ENCODE measurements at regions of chr4 and their contacts with region 1.

Region 1: GRCh38 chr4:119041951-119042560 is 93.6 kb upstream of the MYOZ2 start:
- DNase-seq: peak; percentile 63
- CTCF ChIP-seq: peak; percentile 39

Region 2: DNA sequence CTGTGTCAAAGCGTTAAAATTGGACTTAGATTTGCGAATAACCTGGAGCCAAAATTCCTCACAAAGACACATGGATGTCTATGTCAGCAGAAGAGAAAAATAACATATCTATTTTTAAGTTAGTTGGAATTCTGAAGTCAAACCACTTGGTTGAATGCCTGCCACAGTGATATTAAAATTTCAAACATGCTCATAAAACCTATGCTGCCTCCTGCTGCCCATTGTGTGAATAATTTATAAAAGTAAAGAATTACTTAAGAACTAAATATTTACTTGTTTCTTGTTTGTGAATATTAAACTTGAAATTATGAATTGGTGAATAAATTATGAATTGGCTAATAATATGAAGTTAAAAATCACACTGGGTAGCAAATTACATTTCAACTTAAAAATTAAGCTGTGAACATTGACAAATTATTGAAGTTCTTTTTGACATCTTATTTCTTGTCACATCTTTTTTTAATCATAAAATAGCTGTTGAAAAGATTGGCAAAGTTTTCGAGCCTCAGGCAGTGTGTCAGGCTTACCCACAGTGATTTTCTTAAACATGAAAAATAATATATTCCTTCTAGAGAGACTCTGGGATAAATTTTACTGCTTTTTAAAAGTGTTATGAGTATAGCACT is 244.4 kb after region 1 on chr4:
- in situ Hi-C with region 1: loop called (anchors 25 kb)
- DNase-seq: no peak
- CTCF ChIP-seq: peak; percentile 13

Measured in GM13976 (cell line).